ENCODE measurements at regions of chr9 and their contacts with region 1.

Region 1: DNA sequence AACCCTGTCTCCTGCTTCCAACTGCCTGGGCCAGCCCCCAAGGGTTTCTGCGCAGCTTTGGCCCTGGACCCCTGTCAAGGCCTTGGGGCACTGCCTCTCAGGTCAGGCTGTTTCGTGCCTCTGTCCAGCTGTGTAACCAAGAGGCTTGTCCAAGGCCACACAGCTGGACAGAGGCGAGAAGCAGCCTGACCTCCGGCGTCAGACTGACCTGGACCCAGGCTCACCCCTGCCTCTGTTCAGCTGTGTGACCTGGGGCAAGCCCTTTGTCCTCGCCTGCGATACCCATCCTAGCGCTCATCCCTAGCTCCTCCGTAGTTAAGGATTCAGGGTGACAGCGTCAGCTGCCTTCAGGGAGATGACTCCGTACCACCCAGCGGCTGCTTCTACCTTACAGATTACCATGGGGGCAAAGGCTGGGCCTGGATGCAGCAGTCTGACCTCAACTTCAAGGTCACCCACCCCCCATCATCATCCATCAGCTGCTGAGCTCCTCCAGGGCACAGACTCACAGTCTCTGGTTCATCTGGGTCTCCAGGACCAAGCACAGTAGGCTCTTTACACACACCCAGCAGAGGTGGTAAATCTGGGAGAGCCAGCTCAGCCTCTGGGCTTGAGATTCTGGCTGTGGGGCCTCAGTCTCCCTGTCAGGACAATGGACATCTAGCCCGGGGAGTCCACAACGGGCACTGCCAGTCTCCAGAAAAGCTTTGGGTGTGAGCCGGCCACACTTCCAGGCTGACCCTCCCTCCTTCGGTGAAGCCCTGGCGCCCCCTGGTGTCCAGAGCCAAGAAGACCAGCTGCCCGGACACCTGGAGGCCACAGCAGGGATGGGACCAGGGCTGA is 7.9 kb downstream of the AK1 start:
- DNase-seq: peak; percentile 87
- ATAC-seq: peak; percentile 87
- H3K4me3 Mint-ChIP-seq: no peak overlapping the region
- H3K27ac Mint-ChIP-seq: no peak overlapping the region
- H3K4me1 Mint-ChIP-seq: peaks cover 14% of the 10 kb centered on the region
- H3K27me3 Mint-ChIP-seq: no peaks in the 10 kb centered on the region
- CTCF ChIP-seq: peak; percentile 96

Region 2: GRCh38 chr9:127763918-127764384 is 105.6 kb before region 1 on chr9:
- CTCF ChIA-PET with region 1: interaction called, 45 read pairs
- POLR2A ChIA-PET with region 1: interaction called, 3 read pairs
- intact Hi-C with region 1: no loop called
- DNase-seq: peak; percentile 58
- ATAC-seq: peak; percentile 64
- H3K4me3 Mint-ChIP-seq: no peak overlapping the region
- H3K27ac Mint-ChIP-seq: peak overlapping the region; percentile 35
- H3K4me1 Mint-ChIP-seq: peaks cover 49% of the 10 kb centered on the region
- H3K27me3 Mint-ChIP-seq: no peaks in the 10 kb centered on the region
- CTCF ChIP-seq: peak; percentile 38

Region 3: GRCh38 chr9:127796225-127796813 is 73.2 kb before region 1 on chr9:
- CTCF ChIA-PET with region 1: interaction called, 17 read pairs
- POLR2A ChIA-PET with region 1: interaction called, 3 read pairs
- intact Hi-C with region 1: loop called (anchors 5 kb)
- DNase-seq: no peak
- ATAC-seq: peak; percentile 45
- H3K4me3 Mint-ChIP-seq: no peak overlapping the region
- H3K27ac Mint-ChIP-seq: peak overlapping the region; percentile 81
- H3K4me1 Mint-ChIP-seq: peaks cover 24% of the 10 kb centered on the region
- H3K27me3 Mint-ChIP-seq: no peaks in the 10 kb centered on the region
- CTCF ChIP-seq: no peak

Region 4: DNA sequence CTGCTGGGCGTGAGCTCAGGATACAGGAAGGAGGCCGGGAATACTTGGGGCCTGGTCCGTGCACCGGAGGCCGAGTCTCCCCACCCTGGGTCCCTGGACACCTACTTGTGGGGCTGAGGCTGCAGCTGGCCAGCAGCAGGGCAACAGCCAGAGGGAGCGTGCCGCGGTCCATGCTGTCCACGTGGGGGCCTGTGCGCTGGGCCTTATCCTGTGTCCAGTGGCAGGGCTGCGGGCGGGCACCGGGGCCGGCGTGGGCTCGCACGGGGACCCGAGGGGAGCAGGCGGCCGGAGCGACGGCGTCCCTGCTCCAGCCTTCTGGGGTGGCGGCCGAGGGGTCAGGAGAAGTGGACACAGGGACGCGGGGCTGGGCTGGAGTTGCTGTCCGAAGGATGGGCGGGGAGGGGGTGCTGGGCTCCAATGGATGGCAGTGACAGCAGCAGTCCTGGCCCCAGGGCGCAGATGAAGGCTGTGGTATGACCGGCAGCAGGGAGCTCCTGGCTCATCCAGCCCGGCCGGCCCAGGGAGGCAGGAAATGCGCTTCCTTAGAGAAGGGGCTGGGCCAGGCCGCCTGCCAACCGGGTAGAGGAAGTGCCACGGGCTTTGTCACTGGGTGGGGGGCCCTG is 15.2 kb before region 1 on chr9 and contains the start of gene ENG:
- CTCF ChIA-PET with region 1: interaction called, 107 read pairs
- POLR2A ChIA-PET with region 1: interaction called, 9 read pairs
- intact Hi-C with region 1: no loop called
- DNase-seq: peak; percentile 38
- ATAC-seq: peak; percentile 72
- H3K4me3 Mint-ChIP-seq: peak within 1 kb of the TSS; percentile 82
- H3K27ac Mint-ChIP-seq: peak within 1 kb of the TSS; percentile 83
- H3K4me1 Mint-ChIP-seq: peaks cover 22% of the 10 kb centered on the region
- H3K27me3 Mint-ChIP-seq: no peaks in the 10 kb centered on the region
- CTCF ChIP-seq: no peak
- total RNA-seq, gene ENG: 14.2 to 15.0 TPM

Region 5: DNA sequence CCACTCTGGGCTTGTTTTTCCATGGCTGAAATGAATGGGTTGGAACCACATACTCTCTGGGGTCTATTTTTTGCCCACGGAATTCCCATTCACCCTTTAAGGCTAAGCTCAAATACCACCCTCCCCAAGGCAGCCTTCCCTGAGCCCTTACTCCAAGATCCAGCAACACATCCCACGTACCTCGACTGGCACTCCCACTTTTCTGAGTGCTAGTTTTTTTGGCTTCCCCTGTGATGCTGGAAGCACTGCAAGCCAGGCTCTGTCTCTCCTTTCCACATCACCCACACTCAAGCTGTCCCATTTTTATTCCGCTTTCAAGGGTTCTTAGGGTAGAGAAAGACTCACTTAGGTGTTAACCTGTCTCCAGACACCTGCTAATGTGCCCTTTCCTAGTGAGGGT is 23.9 kb after region 1 on chr9:
- CTCF ChIA-PET with region 1: interaction called, 33 read pairs
- POLR2A ChIA-PET with region 1: interaction called, 4 read pairs
- intact Hi-C with region 1: no loop called
- DNase-seq: no peak
- ATAC-seq: no peak
- H3K4me3 Mint-ChIP-seq: no peak overlapping the region
- H3K27ac Mint-ChIP-seq: no peak overlapping the region
- H3K4me1 Mint-ChIP-seq: peaks cover 10% of the 10 kb centered on the region
- H3K27me3 Mint-ChIP-seq: no peaks in the 10 kb centered on the region
- CTCF ChIP-seq: no peak

Region 6: GRCh38 chr9:128322404-128323211 is 453.1 kb after region 1 on chr9 and contains the starts of genes COQ4 and TRUB2:
- CTCF ChIA-PET with region 1: no interaction called
- POLR2A ChIA-PET with region 1: no interaction called
- intact Hi-C with region 1: no loop called
- DNase-seq: peak; percentile 96
- ATAC-seq: peak; percentile 87
- H3K4me3 Mint-ChIP-seq: peak within 1 kb of the TSS; percentile 99
- H3K27ac Mint-ChIP-seq: peak within 1 kb of the TSS; percentile 97
- H3K4me1 Mint-ChIP-seq: peaks cover 24% of the 10 kb centered on the region
- H3K27me3 Mint-ChIP-seq: no peaks in the 10 kb centered on the region
- CTCF ChIP-seq: no peak
- total RNA-seq, gene COQ4: 31.9 to 33.5 TPM
- total RNA-seq, gene TRUB2: 29.7 to 30.1 TPM